Prostate gland (tissue), 2 donors: ENCODE measurements at regions of chr1 and their contacts with region 1.

Region 1: GRCh38 chr1:29802181-29803068 is 566.1 kb downstream of the PTPRU start:
- DNase-seq: no peak
- H3K4me3 ChIP-seq: no peak overlapping the region
- H3K27ac ChIP-seq: no peak overlapping the region
- H3K4me1 ChIP-seq: peaks cover 4% of the 10 kb centered on the region
- H3K27me3 ChIP-seq: no peaks in the 10 kb centered on the region
- CTCF ChIP-seq: no peak
- POLR2A ChIP-seq: no peak

Region 2: DNA sequence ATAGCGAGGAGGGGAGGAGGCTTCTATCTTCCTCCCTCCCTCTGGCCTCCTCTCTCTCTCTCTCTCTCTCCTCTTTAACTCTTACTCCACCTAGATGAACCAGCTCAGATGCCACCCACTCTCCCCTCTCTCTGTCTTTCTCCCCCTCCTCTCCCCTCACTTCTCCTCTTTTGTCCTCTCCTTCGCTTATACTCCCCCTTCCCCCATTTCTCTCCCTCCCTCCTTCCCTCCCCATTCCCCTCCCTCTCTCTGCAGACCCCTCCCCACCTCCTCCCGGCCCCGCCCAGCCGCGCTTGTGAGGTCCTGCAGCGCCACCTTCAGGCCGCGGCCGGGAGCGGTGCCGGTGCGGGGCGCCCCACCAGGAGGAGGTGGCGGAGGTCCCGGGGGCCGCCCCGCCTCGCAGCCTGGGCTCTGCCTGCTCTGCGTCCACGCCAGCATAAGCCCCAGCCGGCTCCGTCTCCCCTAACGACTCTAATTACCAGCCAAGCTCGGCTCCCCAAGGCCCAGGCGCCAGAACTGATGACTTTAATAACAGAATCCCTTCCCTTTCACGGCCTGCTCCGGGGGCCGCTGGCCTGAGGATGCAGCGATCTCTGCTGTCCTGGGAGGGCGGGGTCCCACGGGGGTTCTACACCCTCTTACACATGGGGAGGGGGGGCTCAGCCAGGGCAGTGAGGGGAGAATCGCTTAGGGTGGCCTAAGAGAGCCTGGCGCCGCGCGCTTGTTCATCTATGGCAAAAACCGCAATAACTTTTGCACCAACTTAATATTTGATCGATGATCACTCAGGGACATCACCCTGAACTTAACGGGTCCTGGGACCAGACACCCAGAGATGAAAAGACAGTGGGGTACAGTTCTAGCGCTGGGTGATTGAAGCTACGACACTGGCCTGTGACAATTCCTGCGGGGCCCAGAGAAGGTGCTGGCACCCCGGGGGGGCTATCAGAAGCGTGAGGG is 283.7 kb after region 1 on chr1:
- intact Hi-C with region 1: loop called (anchors 10 kb)
- DNase-seq: no peak
- H3K4me3 ChIP-seq: no peak overlapping the region
- H3K27ac ChIP-seq: no peak overlapping the region
- H3K4me1 ChIP-seq: no peaks in the 10 kb centered on the region
- H3K27me3 ChIP-seq: no peaks in the 10 kb centered on the region
- CTCF ChIP-seq: peak; percentile 33 to 69 (median 62)
- POLR2A ChIP-seq: no peak